A549 (cell line): ENCODE measurements at regions of chr2 and their contacts with region 1.

Region 1: DNA sequence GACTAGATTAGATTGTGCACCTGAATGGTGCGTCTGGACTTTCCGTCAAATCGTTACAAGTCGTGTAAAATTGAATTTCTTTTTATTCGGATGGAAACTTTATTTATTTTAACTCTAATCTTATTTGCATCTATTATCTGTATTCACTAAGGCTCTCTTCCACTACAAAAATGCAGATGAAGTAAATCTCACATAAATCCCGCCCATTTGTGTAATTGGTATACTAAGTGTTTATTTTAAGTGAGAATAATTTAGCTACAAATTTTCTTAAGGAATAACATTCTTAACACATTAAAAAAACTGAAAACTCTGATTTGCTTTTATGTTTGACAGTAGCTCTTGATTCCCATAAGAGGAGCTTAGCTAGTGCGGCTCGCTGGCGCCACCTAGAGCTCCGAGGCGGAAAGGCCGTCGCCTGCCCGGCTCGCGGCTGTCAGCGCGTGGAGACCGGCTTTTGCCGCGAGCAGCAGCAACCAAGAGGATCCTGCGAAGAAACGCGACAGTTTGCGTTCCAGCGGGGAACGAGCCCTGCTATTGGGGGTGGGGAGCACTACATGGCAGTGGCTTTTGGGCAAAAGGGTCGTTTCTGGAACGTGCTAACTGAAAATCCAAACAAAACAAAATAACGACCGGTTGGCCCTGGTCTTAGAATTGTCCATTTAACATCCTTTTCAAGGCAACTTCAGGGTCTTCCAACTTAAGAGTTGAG is 6.7 kb downstream of the SP9 start:
- DNase-seq: peak in 1 of 2 experiments; percentile 88
- ATAC-seq: peak; percentile 23 to 69; a peak in 4 of 6 replicates
- H3K4me3 ChIP-seq: peak overlapping the region; percentile 64; the same call in 1 of the 3 replicates
- H3K27ac ChIP-seq: peak overlapping the region; percentile 95 to 97
- H3K4me1 ChIP-seq: peaks cover 16% of the 10 kb centered on the region; the same call in 2 of the 3 replicates
- CTCF ChIP-seq: peak; percentile 96
- EP300 ChIP-seq: no peak
- POLR2A ChIP-seq: no peak
- RAD21 ChIP-seq: peak; percentile 95 to 96

Region 2: DNA sequence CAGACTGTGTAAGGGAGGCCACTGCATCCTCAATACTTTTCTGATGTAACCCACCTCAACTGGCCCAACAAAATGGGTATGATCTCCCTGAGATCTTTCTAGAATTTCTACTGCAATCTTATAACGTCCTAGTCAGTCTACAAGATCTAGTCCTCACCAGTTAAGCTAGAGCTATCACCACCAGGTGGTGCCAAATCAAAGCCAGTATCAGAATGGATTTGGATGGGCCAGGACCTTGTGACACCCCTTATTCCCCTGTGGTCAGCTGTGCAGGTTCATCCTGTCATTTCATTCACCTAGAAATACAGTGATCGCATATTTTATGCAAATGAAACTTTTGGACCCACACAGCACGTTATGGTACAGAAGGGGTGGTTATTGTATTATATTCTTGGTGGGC is 183.4 kb before region 1 on chr2:
- CTCF ChIA-PET with region 1: interaction called, 16 read pairs
- POLR2A ChIA-PET with region 1: interaction called, 4 read pairs
- DNase-seq: peak; percentile 66 to 75
- ATAC-seq: peak; percentile 97 to 98
- H3K4me3 ChIP-seq: no peak overlapping the region
- H3K27ac ChIP-seq: no peak overlapping the region
- H3K4me1 ChIP-seq: peaks cover 22% of the 10 kb centered on the region
- CTCF ChIP-seq: peak; percentile 65
- EP300 ChIP-seq: no peak
- POLR2A ChIP-seq: no peak
- RAD21 ChIP-seq: peak; percentile 60 to 63; a peak in 4 of 5 replicates

Region 3: DNA sequence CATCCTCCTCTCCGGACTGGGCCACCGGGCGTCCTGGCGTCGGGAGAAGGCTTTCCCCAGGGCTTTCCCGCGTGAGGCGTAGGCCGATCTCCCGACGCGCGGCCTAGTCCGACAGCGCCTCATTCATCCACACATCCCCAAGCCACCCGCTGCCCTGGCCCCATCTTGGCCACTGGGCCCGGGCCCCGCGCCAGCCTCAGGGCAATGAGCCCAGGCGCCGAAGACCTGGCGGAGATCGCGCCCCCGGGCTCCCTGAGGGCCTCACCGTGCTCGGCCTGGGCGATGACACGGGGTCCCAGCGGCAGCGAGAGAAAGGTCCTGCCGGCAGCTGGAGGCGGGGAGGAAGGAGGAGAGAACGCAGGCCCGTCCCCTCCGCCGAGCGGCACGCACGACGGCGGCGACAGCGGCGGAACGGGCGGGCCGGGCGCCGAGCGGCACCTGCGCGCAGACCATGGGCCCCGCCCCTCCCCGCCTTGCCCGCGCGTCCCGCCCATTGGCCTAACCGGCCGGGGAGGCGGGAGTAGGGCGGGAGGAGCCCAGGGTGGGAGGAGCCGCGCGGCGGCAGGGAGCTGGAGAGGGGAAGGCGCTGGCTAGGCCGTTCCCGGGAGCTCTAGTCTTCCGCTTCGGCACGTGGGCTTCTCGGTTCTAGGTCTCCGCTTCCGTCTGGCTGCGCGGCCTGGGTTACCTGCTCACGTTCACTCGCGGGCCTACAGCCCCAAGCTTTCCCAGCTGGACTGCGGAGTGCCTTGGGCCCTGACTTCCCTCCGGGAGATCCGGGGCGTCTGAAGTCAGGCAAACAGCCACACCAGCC is 93.0 kb before region 1 on chr2 and contains the start of gene OLA1:
- CTCF ChIA-PET with region 1: interaction called, 7 read pairs
- POLR2A ChIA-PET with region 1: interaction called, 18 read pairs
- DNase-seq: peak; percentile 88 to 95
- ATAC-seq: peak; percentile 97
- H3K4me3 ChIP-seq: peak within 1 kb of the TSS; percentile 88
- H3K27ac ChIP-seq: peak within 1 kb of the TSS; percentile 86 to 94
- H3K4me1 ChIP-seq: peaks cover 14% of the 10 kb centered on the region
- CTCF ChIP-seq: no peak
- EP300 ChIP-seq: no peak
- POLR2A ChIP-seq: peak; percentile 94
- RAD21 ChIP-seq: peak in 1 of 2 experiments; percentile 23; a peak in 1 of 5 replicates
- polyA plus RNA-seq, gene OLA1: 145 and 226 TPM in 2 replicates

Region 4: GRCh38 chr2:174326161-174327020 is 15.0 kb before region 1 on chr2:
- CTCF ChIA-PET with region 1: interaction called, 14 read pairs
- POLR2A ChIA-PET with region 1: interaction called, 3 read pairs
- DNase-seq: peak in 1 of 2 experiments; percentile 46
- ATAC-seq: peak; percentile 40 to 63; a peak in 3 of 6 replicates
- H3K4me3 ChIP-seq: peak overlapping the region; percentile 51
- H3K27ac ChIP-seq: peak overlapping the region; percentile 63 to 86
- H3K4me1 ChIP-seq: peaks cover 17% of the 10 kb centered on the region
- CTCF ChIP-seq: no peak
- EP300 ChIP-seq: no peak
- POLR2A ChIP-seq: no peak
- RAD21 ChIP-seq: no peak